Activated CD4-positive, alpha-beta T cell treated with anti-CD3 and anti-CD28 coated beads for 36 hours (primary cell): ENCODE measurements at regions of chr12 and their contacts with region 1.

Region 1: DNA sequence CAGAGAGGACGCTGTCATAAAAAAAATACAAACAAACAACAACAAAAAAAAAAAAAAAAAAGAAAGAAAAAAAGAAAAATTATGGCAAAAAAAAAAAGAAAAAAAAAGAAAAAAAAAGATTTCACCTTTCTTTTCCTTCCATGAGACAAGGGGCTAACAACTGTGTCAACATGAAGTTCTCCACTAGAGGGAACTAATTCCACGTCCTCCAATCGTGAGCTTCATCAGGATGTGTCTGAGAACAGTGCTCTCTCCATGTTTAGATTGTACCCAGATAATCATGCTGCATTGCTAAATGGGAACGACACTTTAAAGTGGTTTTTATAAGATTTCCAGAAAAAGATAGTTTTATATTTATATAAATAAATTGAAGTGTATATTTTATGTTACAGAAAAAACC is 96.2 kb upstream of the PTPRB start:
- DNase-seq: peak; percentile 14
- ATAC-seq: peak; percentile 83
- H3K4me3 Mint-ChIP-seq: no peak overlapping the region
- H3K27ac Mint-ChIP-seq: no peak overlapping the region
- H3K4me1 Mint-ChIP-seq: no peaks in the 10 kb centered on the region
- H3K27me3 Mint-ChIP-seq: no peaks in the 10 kb centered on the region

Region 2: GRCh38 chr12:69900720-69901131 is 832.7 kb before region 1 on chr12:
- CTCF ChIA-PET with region 1: interaction called, 4 read pairs
- POLR2A ChIA-PET with region 1: no interaction called
- intact Hi-C with region 1: loop called in 1 of 2 experiments (anchors 2 kb)
- DNase-seq: peak; percentile 76
- ATAC-seq: peak; percentile 30
- H3K4me3 Mint-ChIP-seq: no peak overlapping the region
- H3K27ac Mint-ChIP-seq: no peak overlapping the region
- H3K4me1 Mint-ChIP-seq: peaks cover 2% of the 10 kb centered on the region
- H3K27me3 Mint-ChIP-seq: no peaks in the 10 kb centered on the region

Region 3: DNA sequence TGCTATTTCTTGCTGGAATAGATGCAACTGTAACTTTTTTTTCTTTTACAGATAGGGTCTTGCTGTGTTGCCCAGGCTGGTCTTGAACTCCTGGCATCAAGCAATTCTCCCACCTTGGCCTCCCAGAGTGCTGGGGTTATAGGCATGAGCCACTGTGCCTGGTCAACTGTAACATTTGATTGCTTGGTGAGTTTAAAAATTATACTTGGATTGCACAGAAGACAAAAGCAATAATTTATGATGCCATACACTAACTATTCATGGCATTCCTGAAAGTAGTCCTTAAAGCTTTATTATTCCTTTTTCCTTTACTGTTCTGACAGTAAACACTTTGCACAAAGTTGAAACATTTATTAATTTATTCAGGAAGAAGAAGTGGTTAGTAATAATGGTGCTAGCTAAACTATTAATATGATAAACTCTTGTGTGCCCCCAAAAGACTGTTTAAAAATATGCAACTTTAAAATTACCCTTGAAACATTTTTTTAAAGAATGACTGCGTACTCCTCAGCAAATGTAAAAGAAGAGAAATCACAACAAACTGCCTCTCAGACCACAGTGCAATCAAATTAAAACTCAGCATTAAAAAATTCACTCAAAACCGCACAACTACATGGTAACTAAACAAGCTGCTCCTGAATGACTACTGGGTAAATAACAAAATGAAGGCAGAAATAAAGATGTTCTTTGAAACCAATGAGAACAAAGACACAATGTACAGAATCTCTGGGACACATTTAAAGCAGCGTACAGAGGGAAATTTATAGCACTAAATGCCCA is 104.5 kb before region 1 on chr12:
- CTCF ChIA-PET with region 1: no interaction called
- POLR2A ChIA-PET with region 1: no interaction called
- intact Hi-C with region 1: no loop called
- DNase-seq: no peak
- ATAC-seq: no peak
- H3K4me3 Mint-ChIP-seq: no peak overlapping the region
- H3K27ac Mint-ChIP-seq: no peak overlapping the region
- H3K4me1 Mint-ChIP-seq: no peaks in the 10 kb centered on the region
- H3K27me3 Mint-ChIP-seq: peaks cover 8% of the 10 kb centered on the region

Region 4: GRCh38 chr12:70849265-70849960 is 116.0 kb after region 1 on chr12:
- CTCF ChIA-PET with region 1: interaction called, 3 read pairs
- POLR2A ChIA-PET with region 1: no interaction called
- intact Hi-C with region 1: loop called in 1 of 2 experiments (anchors 1 kb)
- DNase-seq: no peak
- ATAC-seq: no peak
- H3K4me3 Mint-ChIP-seq: no peak overlapping the region
- H3K27ac Mint-ChIP-seq: no peak overlapping the region
- H3K4me1 Mint-ChIP-seq: no peaks in the 10 kb centered on the region
- H3K27me3 Mint-ChIP-seq: no peaks in the 10 kb centered on the region

Region 5: GRCh38 chr12:71392521-71393145 is 659.2 kb after region 1 on chr12:
- CTCF ChIA-PET with region 1: no interaction called
- POLR2A ChIA-PET with region 1: no interaction called
- intact Hi-C with region 1: loop called (anchors 2 to 5 kb)
- DNase-seq: peak; percentile 6
- ATAC-seq: peak; percentile 69
- H3K4me3 Mint-ChIP-seq: no peak overlapping the region
- H3K27ac Mint-ChIP-seq: no peak overlapping the region
- H3K4me1 Mint-ChIP-seq: no peaks in the 10 kb centered on the region
- H3K27me3 Mint-ChIP-seq: peaks cover 11% of the 10 kb centered on the region